Lower leg skin (tissue), 4 donors: ENCODE measurements at regions of chrX and their contacts with region 1.

Region 1: DNA sequence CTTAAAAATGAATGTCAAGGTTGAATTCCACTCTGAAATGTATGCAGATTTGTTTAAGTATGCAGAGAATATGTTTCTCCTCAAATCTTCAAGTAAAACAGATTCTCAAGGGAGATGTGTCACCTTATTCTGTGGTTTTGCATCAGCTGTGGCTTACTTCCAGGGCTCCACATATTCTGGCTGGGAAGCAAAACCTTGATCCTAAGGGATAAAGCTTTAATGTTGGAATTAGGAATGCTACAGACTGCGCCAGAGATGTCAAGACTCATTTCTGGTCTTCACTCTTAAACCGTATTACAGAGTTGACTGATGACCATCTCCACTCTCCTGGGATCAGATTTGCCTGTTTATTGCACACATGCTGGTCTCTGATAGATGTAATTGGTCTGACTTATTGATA is 143.9 kb upstream of the DIPK2B start:
- DNase-seq: no peak
- H3K4me3 ChIP-seq: no peak overlapping the region
- CTCF ChIP-seq: no peak
- POLR2A ChIP-seq: no peak

Region 2: GRCh38 chrX:45208121-45208856 is 136.3 kb before region 1 on chrX:
- intact Hi-C with region 1: no loop called
- DNase-seq: no peak
- H3K4me3 ChIP-seq: no peak overlapping the region
- CTCF ChIP-seq: no peak
- POLR2A ChIP-seq: no peak

Region 3: GRCh38 chrX:45485686-45486085 is 141.1 kb after region 1 on chrX:
- intact Hi-C with region 1: loop called (anchors 5 kb)
- DNase-seq: no peak
- H3K4me3 ChIP-seq: no peak overlapping the region
- CTCF ChIP-seq: no peak
- POLR2A ChIP-seq: no peak